ENCODE measurements at regions of chr2 and their contacts with region 1.

Region 1: GRCh38 chr2:171433763-171434670 is at the starts of genes DCAF17 and METTL8:
- DNase-seq: peak; percentile 99
- H3K4me3 ChIP-seq: peak within 1 kb of the TSS; percentile 88
- H3K27ac ChIP-seq: peak within 1 kb of the TSS; percentile 93
- H3K4me1 ChIP-seq: peaks cover 23% of the 10 kb centered on the region
- CTCF ChIP-seq: peak; percentile 91
- total RNA-seq, gene DCAF17: 24.1 and 25.9 TPM in 2 replicates
- total RNA-seq, gene METTL8: 6.9 and 11.8 TPM in 2 replicates

Region 2: GRCh38 chr2:170928824-170929685 is 505.0 kb before region 1 on chr2 and contains the start of gene GORASP2:
- CTCF ChIA-PET with region 1: no interaction called
- POLR2A ChIA-PET with region 1: interaction called, 4 read pairs
- intact Hi-C with region 1: loop called (anchors 1 kb)
- DNase-seq: peak; percentile 100
- H3K4me3 ChIP-seq: peak within 1 kb of the TSS; percentile 75
- H3K27ac ChIP-seq: peak within 1 kb of the TSS; percentile 68
- H3K4me1 ChIP-seq: peaks cover 38% of the 10 kb centered on the region
- CTCF ChIP-seq: peak; percentile 86
- total RNA-seq, gene GORASP2: 30.7 and 44.2 TPM in 2 replicates

Region 3: DNA sequence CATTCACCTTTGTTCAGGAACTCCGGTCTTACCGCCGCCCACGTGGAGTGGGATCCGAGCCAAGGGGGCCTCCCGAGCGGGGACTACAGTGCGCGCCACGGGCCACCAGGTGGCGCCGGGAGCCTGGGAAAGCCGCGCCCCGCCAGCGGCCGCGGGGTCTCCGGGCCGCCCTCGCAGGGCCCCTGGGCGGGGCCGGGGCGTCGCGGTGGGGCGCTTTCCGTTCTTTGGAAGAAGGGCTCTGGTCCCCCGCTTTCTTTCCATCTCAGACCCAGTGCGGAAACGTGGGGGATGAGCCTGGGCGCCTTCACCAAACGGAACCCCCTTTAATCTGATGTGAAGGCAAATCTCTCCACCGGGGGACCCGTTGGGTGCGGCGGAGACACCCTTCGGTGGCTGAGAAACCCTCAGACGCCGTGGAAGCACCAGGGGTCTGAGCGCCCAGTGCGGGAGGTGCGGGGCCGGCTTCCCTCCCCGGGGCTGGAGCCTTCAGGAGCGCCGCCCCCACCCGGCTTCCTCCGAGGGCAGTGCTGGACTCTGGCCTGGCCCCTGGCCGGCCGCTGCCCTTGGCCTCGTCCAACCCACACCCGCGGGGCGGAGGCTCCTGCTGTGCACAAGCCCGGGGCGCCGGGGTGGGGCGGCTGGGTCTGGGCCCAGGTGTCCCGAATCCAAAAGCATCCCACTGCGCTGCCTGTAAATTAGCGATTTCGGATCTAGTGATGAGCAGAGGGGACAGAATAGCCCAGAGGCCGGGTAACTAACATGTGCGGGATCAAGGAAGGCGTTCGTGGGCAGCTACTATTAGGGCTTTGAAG is 460.3 kb before region 1 on chr2:
- CTCF ChIA-PET with region 1: interaction called, 3 read pairs
- POLR2A ChIA-PET with region 1: no interaction called
- intact Hi-C with region 1: loop called (anchors 2 kb)
- DNase-seq: peak; percentile 87
- H3K4me3 ChIP-seq: peak overlapping the region; percentile 70
- H3K27ac ChIP-seq: no peak overlapping the region
- H3K4me1 ChIP-seq: peaks cover 16% of the 10 kb centered on the region
- CTCF ChIP-seq: peak; percentile 98

Region 4: DNA sequence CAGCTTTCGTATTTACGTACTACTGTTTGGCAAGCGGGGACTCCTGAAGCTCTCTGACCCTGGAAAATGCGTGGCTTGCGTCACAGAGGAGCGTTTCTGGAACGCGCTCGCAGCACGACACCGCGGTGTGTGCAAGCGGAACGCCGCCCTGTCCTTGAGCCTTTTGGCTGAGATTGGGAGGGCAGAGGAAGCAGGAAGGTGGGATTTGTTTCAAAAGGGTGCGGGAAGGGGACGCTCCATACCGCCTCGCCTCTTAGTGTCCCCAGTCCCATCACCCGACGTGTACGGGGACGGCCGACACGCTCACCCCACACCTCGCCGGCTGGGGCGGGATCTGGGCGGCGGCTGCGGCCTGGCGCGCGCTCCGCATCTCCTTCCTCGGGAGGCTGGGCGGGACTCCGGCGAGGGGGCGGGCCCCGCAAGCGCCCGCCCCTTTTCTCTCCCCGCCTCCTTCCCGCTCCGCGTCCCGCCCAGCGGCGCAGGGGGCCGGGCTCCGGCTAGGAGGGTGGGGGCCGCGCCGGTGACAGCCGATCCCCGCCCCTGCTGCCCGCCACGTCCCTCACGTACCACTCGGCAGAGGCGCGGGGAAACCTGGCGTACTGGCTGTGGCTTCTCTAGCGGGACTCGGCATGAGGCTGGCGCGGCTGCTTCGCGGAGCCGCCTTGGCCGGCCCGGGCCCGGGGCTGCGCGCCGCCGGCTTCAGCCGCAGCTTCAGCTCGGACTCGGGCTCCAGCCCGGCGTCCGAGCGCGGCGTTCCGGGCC is 1121.7 kb after region 1 on chr2 and contains the start of gene PDK1:
- CTCF ChIA-PET with region 1: no interaction called
- POLR2A ChIA-PET with region 1: no interaction called
- intact Hi-C with region 1: loop called (anchors 10 kb)
- DNase-seq: peak; percentile 89
- H3K4me3 ChIP-seq: peak within 1 kb of the TSS; percentile 90
- H3K27ac ChIP-seq: peak within 1 kb of the TSS; percentile 77
- H3K4me1 ChIP-seq: peaks cover 27% of the 10 kb centered on the region
- CTCF ChIP-seq: no peak
- total RNA-seq, gene PDK1: 26.0 and 29.3 TPM in 2 replicates

Measured in OCI-LY7 (cell line).